ENCODE measurements at regions of chr1 and their contacts with region 1.

Region 1: GRCh38 chr1:178310685-178311105 is 186.1 kb downstream of the CLEC20A start:
- DNase-seq: peak; percentile 54 to 82 (median 73)
- H3K4me3 ChIP-seq: no peak overlapping the region
- H3K4me3 Mint-ChIP-seq: no peak overlapping the region
- H3K27ac ChIP-seq: no peak overlapping the region
- H3K27ac Mint-ChIP-seq: peak overlapping the region in 2 of 7 donors; percentile 50 to 66
- H3K4me1 ChIP-seq: no peaks in the 10 kb centered on the region
- H3K4me1 Mint-ChIP-seq: peaks cover 5% of the 10 kb centered on the region
- H3K27me3 ChIP-seq: no peaks in the 10 kb centered on the region
- H3K27me3 Mint-ChIP-seq: peaks cover 0 to 3% (median 1%) of the 10 kb centered on the region in 3 donors
- CTCF ChIP-seq: peak; percentile 78

Region 2: GRCh38 chr1:178344513-178345082 is 33.9 kb after region 1 on chr1:
- intact Hi-C with region 1: no loop called
- DNase-seq: peak; percentile 50 to 64 (median 62)
- H3K4me3 ChIP-seq: peak overlapping the region in 1 of 3 experiments; percentile 17
- H3K4me3 Mint-ChIP-seq: peak overlapping the region in 1 of 2 donors; percentile 52
- H3K27ac ChIP-seq: peak overlapping the region in 1 of 2 donors; percentile 4
- H3K27ac Mint-ChIP-seq: peak overlapping the region in 6 of 7 donors; percentile 19 to 66 (median 35)
- H3K4me1 ChIP-seq: peaks cover 21 to 22% of the 10 kb centered on the region in 2 donors
- H3K4me1 Mint-ChIP-seq: peaks cover 24% of the 10 kb centered on the region
- H3K27me3 ChIP-seq: no peaks in the 10 kb centered on the region
- H3K27me3 Mint-ChIP-seq: no peaks in the 10 kb centered on the region
- CTCF ChIP-seq: peak; percentile 72

Region 3: GRCh38 chr1:178483251-178483957 is 172.7 kb after region 1 on chr1:
- intact Hi-C with region 1: no loop called
- DNase-seq: no peak
- H3K4me3 ChIP-seq: no peak overlapping the region
- H3K4me3 Mint-ChIP-seq: no peak overlapping the region
- H3K27ac ChIP-seq: no peak overlapping the region
- H3K27ac Mint-ChIP-seq: peak overlapping the region in 1 of 7 donors; percentile 13
- H3K4me1 ChIP-seq: peaks cover 15 to 26% of the 10 kb centered on the region in 2 donors
- H3K4me1 Mint-ChIP-seq: peaks cover 23% of the 10 kb centered on the region
- H3K27me3 ChIP-seq: no peaks in the 10 kb centered on the region
- H3K27me3 Mint-ChIP-seq: peaks cover 0 to 4% (median 2%) of the 10 kb centered on the region in 3 donors
- CTCF ChIP-seq: no peak

Region 4: DNA sequence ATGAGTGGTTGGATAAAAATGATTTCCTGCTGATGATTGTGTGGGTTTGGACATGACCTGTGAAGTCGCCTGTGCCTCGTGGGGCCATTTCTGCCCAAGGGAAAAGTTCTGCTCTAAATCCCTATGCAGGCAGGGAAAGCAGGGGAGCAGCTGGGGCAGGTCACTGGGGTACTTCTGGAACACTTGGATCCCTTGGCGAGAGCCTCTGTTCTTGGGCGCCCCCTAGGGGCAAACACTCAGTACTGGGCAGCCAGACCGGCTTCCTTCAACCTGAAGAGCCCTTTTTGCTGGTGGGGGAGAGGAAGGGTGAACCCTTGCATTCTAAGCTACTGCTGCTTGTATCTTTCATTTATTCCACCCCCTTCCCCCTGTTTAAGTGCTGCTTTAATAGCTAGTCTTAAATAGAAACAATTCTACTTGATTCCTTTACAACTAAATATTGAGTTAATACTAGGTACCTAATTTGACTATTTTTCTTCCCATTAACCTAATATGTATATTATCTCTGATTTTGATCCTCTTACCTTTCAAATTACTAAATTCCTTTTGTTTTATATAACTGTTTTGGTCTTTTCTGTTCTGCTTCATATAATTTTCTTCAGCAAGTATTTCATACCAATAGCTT is 191.1 kb after region 1 on chr1:
- intact Hi-C with region 1: loop called in 1 of 2 experiments (anchors 5 kb)
- DNase-seq: peak; percentile 27 to 60 (median 59)
- H3K4me3 ChIP-seq: no peak overlapping the region
- H3K4me3 Mint-ChIP-seq: no peak overlapping the region
- H3K27ac ChIP-seq: no peak overlapping the region
- H3K27ac Mint-ChIP-seq: no peak overlapping the region
- H3K4me1 ChIP-seq: no peaks in the 10 kb centered on the region
- H3K4me1 Mint-ChIP-seq: peaks cover 1% of the 10 kb centered on the region
- H3K27me3 ChIP-seq: no peaks in the 10 kb centered on the region
- H3K27me3 Mint-ChIP-seq: peaks cover 2 to 4% (median 2%) of the 10 kb centered on the region in 3 donors
- CTCF ChIP-seq: peak; percentile 96